HEK293 (cell line): ENCODE measurements at regions of chr19 and their contacts with region 1.

Region 1: DNA sequence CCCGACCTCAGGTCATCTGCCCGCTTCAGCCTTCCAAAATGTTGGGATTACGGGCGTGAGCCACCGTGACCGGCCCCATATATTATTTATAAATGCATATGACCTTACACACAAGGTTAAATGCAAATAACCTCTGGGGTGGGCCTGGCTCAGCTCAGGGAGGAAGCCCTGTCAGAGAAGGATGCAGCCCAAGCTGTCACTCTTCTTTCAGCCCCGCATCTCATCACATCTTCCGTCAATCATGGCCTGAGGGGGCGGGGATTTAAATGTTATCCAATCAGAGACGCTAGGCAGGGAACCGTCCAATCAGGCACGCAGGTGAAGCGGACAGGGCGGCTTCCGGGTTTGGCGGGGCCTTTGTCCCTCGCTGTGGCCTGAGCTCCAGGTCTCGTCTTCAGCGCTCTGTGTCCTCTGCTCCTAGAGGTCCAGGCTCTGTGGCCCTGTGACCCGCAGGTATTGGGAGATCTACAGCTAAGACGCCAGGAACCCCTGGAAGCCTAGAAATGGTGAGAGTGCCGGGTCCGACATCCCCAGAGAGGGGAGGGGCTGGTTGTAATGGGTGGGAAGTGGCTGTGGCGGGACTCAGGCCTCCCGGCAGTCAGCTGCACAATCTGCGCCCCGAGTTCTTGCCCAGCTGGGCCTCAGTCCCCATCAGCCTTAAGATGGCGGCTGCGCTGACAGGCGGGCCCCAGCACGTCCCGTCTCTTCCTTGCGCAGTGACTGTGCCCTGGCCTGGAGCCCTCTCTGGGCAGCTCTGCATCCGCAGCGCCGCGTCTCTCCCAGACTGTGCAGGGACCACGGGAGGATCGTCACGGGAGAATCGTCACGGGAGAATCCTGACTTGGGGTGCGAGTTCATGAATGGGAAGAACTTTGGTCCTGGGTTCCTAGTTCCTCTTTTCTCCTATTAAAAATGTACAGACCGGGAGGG is at the start of gene ZNF430:
- H3K4me3 ChIP-seq: peak within 1 kb of the TSS; percentile 93
- H3K27ac ChIP-seq: peak within 1 kb of the TSS; percentile 84
- H3K4me1 ChIP-seq: no peaks in the 10 kb centered on the region
- CTCF ChIP-seq: no peak

Region 2: GRCh38 chr19:20912973-20913372 is 107.6 kb before region 1 on chr19:
- CTCF ChIA-PET with region 1: no interaction called
- POLR2A ChIA-PET with region 1: no interaction called
- H3K4me3 ChIP-seq: no peak overlapping the region
- H3K27ac ChIP-seq: no peak overlapping the region
- H3K4me1 ChIP-seq: no peaks in the 10 kb centered on the region
- CTCF ChIP-seq: no peak

Region 3: DNA sequence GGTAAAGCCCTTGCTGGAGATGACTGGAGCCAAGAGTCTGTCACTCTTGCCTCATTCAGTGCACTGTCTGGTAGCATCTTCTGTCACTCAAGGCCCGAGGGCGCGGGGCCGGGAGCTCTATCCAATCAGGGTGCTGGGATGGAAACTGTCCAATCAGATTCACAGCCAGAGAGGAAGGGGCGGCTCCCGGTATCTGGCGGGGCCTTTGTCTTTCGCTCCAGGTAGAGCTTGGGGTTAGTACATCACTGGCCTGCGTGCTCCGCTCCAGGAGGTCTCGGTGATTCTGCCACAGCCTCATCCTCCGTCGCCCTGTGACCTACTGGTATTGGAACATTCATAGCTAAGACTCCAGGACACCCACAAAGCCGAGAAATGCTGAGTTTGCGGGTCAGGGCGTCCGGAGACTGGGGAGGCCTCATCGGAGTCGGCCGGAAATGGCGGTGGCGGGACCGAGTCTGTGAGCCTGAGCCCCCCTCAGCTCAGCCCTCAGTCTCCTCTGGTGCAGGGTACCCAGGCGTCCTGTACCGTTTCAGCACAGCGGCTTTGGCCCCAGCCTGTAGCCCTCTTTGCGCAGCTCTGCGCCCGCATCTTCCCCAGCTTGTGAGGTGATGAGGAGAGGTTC is 20.7 kb before region 1 on chr19:
- CTCF ChIA-PET with region 1: no interaction called
- POLR2A ChIA-PET with region 1: interaction called, 12 read pairs
- H3K4me3 ChIP-seq: peak overlapping the region; percentile 40
- H3K27ac ChIP-seq: no peak overlapping the region
- H3K4me1 ChIP-seq: no peaks in the 10 kb centered on the region
- CTCF ChIP-seq: no peak

Region 4: GRCh38 chr19:21065336-21065735 is 44.8 kb after region 1 on chr19:
- CTCF ChIA-PET with region 1: no interaction called
- POLR2A ChIA-PET with region 1: no interaction called
- H3K4me3 ChIP-seq: no peak overlapping the region
- H3K27ac ChIP-seq: no peak overlapping the region
- H3K4me1 ChIP-seq: no peaks in the 10 kb centered on the region
- CTCF ChIP-seq: no peak

Region 5: DNA sequence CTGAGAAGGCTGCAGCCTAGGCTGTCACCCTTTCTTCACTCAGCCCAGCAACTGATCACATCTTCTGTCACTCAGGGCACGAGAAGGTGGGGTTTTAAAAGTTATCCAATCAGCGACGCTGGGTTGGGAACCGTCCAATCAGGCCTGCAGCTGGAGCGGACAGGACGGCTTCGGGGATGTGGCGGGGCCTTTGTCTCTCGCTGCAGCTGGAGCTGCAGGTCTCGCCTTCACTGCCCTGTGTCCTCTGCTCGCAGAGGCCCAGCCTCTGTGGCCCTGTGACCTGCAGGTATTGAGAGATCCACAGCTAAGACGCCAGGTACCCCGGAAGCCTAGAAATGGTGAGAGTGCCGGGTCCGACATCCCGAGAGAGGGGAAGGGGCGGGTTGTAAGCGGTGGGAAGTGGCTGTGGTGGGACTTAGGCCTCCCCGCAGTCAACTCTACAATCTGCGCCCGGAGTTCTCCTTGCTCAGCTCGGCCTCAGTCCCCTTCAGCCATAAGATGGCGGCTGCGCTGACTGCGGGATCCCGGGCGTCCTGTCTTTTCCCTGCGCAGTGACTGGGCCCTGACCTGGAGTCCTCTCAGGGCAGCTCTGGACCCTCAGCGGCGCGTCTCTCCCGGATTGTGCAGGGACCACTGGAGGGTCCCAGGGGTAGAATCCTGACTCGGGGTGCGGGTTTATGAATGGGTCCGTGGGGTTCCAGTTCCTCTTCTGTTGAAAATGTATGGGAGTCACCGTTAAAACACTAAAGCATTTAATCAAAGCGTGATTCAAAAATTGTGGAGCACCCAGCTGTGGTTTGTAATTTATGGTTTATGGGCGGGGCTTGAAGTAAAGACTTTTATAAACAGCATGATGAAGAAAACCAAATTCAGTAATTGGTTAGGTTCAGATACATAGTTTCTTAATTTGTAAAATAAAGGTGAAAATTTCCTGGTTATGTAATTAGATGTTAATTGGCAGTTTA is 61.7 kb after region 1 on chr19 and contains the start of gene ZNF714:
- CTCF ChIA-PET with region 1: no interaction called
- POLR2A ChIA-PET with region 1: interaction called, 16 read pairs
- H3K4me3 ChIP-seq: peak within 1 kb of the TSS; percentile 84
- H3K27ac ChIP-seq: peak within 1 kb of the TSS; percentile 69
- H3K4me1 ChIP-seq: peaks cover 9% of the 10 kb centered on the region; the same call in 1 of the 2 replicates
- CTCF ChIP-seq: no peak